Panc1 (cell line): ENCODE measurements at regions of chr19 and their contacts with region 1.

Region 1: DNA sequence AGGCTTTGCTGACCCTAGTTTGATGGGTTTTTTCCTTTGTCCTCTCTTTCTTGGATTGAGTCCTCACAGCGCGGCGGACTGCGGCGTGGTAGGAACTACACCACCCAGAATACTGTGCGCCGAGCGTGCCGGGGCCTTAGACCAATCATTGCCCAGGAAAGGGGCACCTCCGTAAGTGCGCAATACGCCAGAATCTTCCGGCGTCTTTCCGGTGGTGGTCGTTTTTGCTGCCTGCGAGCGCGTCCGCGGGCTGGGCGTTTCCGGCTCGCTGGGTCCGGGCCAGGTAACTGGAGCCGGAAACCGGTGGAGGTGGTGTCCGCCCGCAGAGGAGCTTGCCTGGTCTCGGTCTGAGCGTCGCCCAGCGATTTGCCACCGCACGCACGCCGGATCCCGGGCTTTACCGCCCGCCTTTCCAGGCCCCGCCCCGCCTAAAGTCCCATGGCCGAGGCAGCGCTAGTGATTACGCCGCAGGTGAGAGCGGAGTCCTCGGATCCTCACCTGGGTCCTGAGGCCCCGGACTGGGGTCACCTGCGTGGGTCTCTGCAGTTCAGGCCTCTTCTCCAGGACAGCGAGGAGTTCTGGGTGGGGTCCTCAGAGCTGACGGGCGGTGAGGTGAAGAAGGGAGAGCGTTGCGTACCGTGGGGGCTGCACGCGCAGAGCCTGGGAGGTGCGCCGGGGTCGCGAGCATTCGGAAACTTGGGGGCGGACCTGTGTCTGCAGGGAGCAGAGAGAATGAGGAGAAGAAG is at the start of gene ZNF549:
- DNase-seq: no peak
- ATAC-seq: no peak
- H3K4me3 ChIP-seq: peak within 1 kb of the TSS in 1 of 2 experiments; percentile 34; a peak in 1 of 4 replicates
- H3K27ac ChIP-seq: no peak within 1 kb of the TSS
- H3K4me1 ChIP-seq: no peaks in the 10 kb centered on the region
- H3K27me3 ChIP-seq: no peaks in the 10 kb centered on the region
- CTCF ChIP-seq: no peak
- total RNA-seq, gene ZNF549: not detected

Region 2: DNA sequence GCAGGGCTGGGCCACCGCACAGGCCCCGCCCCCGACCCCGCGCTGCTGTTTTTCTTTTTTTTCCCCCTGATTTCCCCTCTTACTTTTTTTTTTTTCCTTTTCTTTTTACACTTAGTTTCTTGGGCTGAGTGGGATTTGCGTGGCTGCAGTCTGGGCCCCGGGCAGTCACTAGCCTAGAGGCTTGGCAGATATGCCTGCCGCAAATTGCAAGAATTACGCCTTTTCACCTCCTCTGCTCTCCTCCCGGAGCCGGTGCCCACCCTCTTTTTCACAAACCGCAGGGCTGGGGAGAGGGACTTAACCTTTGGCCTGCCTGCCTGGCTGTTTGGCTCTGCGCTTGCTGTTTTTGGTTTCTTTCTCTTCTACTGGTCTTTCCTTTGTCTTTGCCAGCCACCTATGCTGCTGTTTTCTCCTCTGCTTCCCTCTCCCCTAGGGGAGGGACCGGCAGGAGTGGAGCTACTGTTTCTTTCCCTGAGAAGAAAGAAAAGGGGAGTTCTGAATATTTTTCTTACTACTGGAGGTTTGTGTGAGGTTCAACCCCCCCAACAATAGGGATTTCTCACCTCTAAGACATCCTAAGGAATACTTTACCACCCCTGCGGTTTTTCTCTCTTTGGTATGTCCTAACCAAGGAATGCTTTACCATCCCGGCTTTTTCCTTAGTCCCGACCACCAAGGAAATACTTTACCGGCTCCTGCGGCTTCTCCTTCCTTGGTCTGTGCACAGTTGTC is 276.5 kb after region 1 on chr19:
- CTCF ChIA-PET with region 1: no interaction called
- POLR2A ChIA-PET with region 1: interaction called, 14 read pairs
- in situ Hi-C with region 1: no loop called
- intact Hi-C with region 1: no loop called
- DNase-seq: no peak
- ATAC-seq: peak; percentile 77
- H3K4me3 ChIP-seq: peak overlapping the region; percentile 49 to 76
- H3K27ac ChIP-seq: peak overlapping the region; percentile 86
- H3K4me1 ChIP-seq: peaks cover 6% of the 10 kb centered on the region; the same call in 1 of the 2 replicates
- H3K27me3 ChIP-seq: no peaks in the 10 kb centered on the region
- CTCF ChIP-seq: no peak

Region 3: DNA sequence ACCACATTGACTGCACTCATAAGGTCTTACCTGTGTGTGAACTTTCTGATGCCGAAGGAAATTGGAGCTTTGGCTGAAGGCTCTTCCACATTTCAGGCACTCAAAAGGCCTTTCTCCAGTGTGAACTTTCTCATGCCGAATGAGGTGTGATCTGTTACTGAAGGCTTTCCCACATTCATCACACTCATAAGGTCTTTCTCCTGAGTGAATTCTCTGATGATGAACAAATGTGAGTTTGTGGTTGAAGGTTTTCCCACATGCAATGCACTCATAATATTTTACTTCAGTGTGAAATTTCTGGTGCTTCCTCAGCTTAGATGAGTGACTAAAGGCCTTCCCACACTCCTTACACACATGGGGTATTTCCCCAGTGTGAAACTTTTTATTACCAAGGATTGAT is 906.9 kb after region 1 on chr19:
- CTCF ChIA-PET with region 1: no interaction called
- POLR2A ChIA-PET with region 1: no interaction called
- in situ Hi-C with region 1: no loop called
- intact Hi-C with region 1: no loop called
- DNase-seq: no peak
- ATAC-seq: no peak
- H3K4me3 ChIP-seq: no peak overlapping the region
- H3K27ac ChIP-seq: no peak overlapping the region
- H3K4me1 ChIP-seq: no peaks in the 10 kb centered on the region
- H3K27me3 ChIP-seq: no peaks in the 10 kb centered on the region
- CTCF ChIP-seq: no peak